ENCODE measurements at regions of chr22 and their contacts with region 1.

Region 1: DNA sequence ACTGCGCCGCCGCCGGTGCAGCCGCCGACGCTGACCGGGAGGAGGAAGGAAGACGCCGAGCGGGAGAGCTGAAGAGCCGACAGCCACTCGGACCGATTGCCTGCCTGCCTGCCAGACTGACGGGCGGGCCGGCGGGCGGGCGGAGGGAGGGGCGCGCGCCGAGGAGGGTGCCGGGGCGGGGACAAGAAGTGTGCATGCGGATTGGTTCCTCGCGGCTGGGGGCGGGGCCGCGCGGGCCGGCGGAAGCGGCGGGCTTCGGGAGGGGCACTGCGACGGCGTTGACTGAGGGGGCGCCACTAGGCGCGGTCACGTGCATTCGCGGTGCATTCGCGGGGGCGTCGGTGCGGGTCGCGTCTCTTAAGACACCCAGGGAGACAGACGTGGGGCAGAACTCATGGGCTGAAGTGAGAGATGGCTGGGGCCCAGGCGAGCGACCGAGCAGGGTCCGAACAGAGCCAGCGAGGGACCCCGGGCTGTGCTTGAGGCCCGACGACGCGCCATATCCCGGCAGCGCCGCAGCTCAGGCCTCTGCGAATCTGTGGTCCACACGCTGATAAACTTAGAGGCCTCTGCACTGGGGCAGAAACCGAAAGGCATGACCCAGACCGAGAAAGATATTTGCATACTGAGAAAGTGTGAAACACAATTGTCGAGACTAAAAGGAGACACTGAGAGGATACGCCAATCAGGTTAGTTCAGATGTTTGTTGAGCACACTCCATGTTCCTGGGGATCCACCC is at the start of gene MAPK1:
- DNase-seq: peak; percentile 94
- H3K4me3 Mint-ChIP-seq: peak within 1 kb of the TSS; percentile 91
- H3K27ac Mint-ChIP-seq: peak within 1 kb of the TSS; percentile 93
- H3K4me1 Mint-ChIP-seq: peaks cover 36% of the 10 kb centered on the region
- H3K27me3 Mint-ChIP-seq: no peaks in the 10 kb centered on the region
- CTCF ChIP-seq: peak; percentile 57
- total RNA-seq, gene MAPK1: 144 and 157 TPM in 2 replicates

Region 2: GRCh38 chr22:21816787-21817496 is 50.8 kb before region 1 on chr22:
- CTCF ChIA-PET with region 1: interaction called, 4 read pairs
- intact Hi-C with region 1: loop called (anchors 10 kb)
- DNase-seq: peak; percentile 36
- H3K4me3 Mint-ChIP-seq: peak overlapping the region; percentile 4
- H3K27ac Mint-ChIP-seq: peak overlapping the region; percentile 82
- H3K4me1 Mint-ChIP-seq: peaks cover 45% of the 10 kb centered on the region
- H3K27me3 Mint-ChIP-seq: no peaks in the 10 kb centered on the region
- CTCF ChIP-seq: no peak